Activated T-helper 1 cell treated with anti-CD3 and anti-CD28 coated beads, Interleukin-12 subunit alpha, Interleukin-12 subunit beta, Interleukin-2, Interleukin-4 antibody, amounts not matched to agents 30 ng/mL and 10 ng/mL and 1 ng/mL, durations not matched to agents 14 hours and 24 hours and 36 hours (primary cell): ENCODE measurements at regions of chr15 and their contacts with region 1.

Region 1: GRCh38 chr15:65054333-65055200 is 9.4 kb downstream of the SLC51B start:
- DNase-seq: peak; percentile 21
- H3K4me3 Mint-ChIP-seq: no peak overlapping the region
- H3K27ac Mint-ChIP-seq: no peak overlapping the region
- H3K4me1 Mint-ChIP-seq: peaks cover 14% of the 10 kb centered on the region
- H3K27me3 Mint-ChIP-seq: no peaks in the 10 kb centered on the region

Region 2: GRCh38 chr15:65077981-65078352 is 23.4 kb after region 1 on chr15:
- intact Hi-C with region 1: loop called (anchors 2 kb)
- DNase-seq: peak; percentile 29
- H3K4me3 Mint-ChIP-seq: no peak overlapping the region
- H3K27ac Mint-ChIP-seq: no peak overlapping the region
- H3K4me1 Mint-ChIP-seq: peaks cover 16% of the 10 kb centered on the region
- H3K27me3 Mint-ChIP-seq: peaks cover 34% of the 10 kb centered on the region

Region 3: DNA sequence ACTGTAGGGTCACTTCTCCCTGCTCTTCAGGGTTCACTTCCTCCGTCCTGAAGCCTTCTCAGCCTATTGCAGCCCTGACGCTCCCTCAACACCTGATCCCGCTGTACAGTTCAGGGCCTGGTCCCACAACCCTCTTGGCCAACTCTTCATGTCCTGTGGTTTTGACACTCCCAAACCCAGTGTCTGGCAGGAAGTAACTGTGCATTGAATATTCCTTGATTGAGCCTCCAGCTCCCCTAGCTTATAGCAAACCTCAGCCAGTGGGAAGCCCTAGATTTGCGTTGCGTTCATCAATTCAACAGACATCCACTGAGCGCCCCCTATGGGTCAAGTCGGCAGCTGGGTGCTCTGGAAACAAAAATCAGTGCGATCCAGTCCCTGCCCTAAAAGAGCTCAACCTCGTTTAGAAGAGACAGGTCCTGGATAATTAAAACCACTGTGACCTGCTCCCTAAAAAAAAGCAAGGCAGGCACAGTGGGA is 46.9 kb after region 1 on chr15:
- intact Hi-C with region 1: loop called (anchors 1 kb)
- DNase-seq: peak; percentile 22
- H3K4me3 Mint-ChIP-seq: no peak overlapping the region
- H3K27ac Mint-ChIP-seq: peak overlapping the region; percentile 52
- H3K4me1 Mint-ChIP-seq: no peaks in the 10 kb centered on the region
- H3K27me3 Mint-ChIP-seq: no peaks in the 10 kb centered on the region

Region 4: DNA sequence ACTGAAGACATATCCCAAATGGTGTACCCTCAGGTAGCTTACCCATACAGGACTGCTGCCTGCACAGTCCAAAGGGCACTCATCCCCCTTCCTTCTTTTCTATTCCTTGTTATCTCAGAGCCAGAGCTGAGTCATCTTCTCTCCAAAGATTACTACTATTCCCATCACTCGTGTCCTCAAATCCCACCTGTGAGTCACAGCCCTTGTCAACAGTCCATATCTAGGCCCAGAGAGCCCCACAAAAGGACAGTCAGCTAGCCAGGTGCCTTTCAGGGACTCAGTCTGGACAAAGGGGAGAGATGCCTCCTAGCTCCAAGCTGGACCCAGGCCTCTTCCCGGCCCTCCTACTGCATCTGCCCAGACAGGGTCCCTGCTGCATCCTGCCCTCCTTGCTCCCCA is 221.2 kb after region 1 on chr15:
- intact Hi-C with region 1: loop called (anchors 1 kb)
- DNase-seq: no peak
- H3K4me3 Mint-ChIP-seq: no peak overlapping the region
- H3K27ac Mint-ChIP-seq: no peak overlapping the region
- H3K4me1 Mint-ChIP-seq: peaks cover 25% of the 10 kb centered on the region
- H3K27me3 Mint-ChIP-seq: no peaks in the 10 kb centered on the region

Region 5: DNA sequence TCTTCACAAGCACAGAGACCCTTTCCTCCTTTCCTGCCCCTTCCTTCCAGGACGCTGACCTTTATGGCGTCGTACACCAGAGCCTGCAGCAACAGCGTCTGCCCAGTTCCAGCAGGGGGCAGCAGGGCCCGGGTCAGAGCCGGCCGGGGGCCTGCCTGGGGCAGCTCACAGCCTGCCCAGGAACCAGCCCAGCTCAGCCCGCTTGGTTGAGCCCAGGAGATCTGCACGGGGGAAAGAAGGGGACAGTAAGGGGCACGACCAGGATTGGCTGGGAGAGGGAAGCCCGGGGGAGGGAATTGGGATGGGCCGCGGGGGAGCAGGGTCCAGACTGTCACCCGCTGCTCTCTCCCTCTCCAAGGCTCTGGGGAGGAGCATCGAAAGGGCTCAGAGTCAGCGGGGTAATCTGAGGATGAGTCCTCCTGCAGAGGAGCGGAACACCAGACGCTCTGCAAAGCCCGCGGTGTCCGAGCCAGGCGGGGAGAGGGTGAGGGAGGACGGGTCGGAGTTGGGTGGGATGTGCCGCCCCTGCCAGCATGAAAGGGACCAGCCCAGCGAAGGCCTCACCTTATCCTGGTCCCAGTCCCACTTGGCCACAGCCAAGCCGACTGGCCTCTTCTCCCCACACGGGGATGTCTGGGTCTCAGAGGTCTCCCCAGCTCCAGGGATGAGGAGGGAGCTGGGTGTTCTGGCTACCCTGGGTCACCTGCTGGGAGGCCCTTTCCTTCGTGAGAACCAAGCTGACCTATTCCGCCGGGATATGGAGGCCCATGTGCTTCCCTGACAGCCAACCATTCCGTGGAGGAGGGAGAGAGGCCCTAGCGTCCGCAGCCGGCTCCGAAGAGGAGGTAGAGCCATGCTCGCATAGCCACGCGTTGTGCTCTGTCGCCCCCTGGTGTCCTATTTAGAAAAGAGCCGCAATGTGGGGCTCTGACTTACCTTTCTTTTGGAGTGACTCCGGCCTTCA is 330.6 kb after region 1 on chr15:
- intact Hi-C with region 1: loop called (anchors 1 kb)
- DNase-seq: peak; percentile 77
- H3K4me3 Mint-ChIP-seq: peak overlapping the region; percentile 83
- H3K27ac Mint-ChIP-seq: peak overlapping the region; percentile 86
- H3K4me1 Mint-ChIP-seq: peaks cover 11% of the 10 kb centered on the region
- H3K27me3 Mint-ChIP-seq: peaks cover 28% of the 10 kb centered on the region

Region 6: GRCh38 chr15:65494071-65494470 is 439.5 kb after region 1 on chr15:
- intact Hi-C with region 1: no loop called
- DNase-seq: no peak
- H3K4me3 Mint-ChIP-seq: no peak overlapping the region
- H3K27ac Mint-ChIP-seq: no peak overlapping the region
- H3K4me1 Mint-ChIP-seq: no peaks in the 10 kb centered on the region
- H3K27me3 Mint-ChIP-seq: no peaks in the 10 kb centered on the region

Region 7: DNA sequence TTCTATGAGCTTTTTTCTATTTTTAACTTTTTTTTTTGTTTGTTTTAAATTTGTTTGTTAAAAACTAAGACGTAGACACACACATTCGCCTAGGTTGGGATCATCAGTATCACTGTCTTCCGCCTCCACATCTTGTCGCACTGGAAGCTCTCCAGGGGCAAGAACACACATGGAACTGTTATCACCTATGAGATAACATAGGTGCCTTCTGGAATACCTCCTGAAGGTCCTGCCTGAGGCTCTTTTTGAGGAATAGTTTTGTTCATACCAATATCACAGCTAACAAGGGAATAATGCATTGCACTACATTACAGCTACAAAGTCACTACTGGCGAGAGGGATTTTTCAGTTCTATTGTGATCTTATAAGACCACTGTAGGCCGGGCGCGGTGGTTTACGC is 1480.4 kb after region 1 on chr15:
- intact Hi-C with region 1: no loop called
- DNase-seq: no peak
- H3K4me3 Mint-ChIP-seq: no peak overlapping the region
- H3K27ac Mint-ChIP-seq: no peak overlapping the region
- H3K4me1 Mint-ChIP-seq: no peaks in the 10 kb centered on the region
- H3K27me3 Mint-ChIP-seq: no peaks in the 10 kb centered on the region